Activated B cell treated with CpG ODN at 0.5 μM for 24 hours (primary cell): ENCODE measurements at regions of chr6 and their contacts with region 1.

Region 1: DNA sequence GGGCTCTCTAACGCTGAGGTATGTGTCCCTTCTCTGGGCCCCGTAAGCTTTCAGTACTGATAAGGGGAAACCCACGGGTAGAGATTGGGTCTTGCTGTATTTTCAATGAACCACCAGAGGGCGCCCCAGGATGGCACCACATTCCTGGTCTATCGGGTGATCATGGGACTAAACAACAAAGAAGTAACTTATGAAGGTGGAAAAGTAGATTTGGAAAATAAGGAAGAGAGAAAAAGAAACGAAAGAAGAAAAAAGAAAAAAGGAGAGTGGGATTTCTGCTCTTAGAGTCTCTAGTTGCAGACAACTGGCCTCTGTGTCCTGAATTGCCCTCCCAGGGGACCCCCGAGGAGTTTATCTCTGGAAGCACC is 93.8 kb downstream of the GMPR start:
- DNase-seq: peak; percentile 62
- ATAC-seq: peak; percentile 96
- H3K4me3 Mint-ChIP-seq: no peak overlapping the region
- H3K27ac Mint-ChIP-seq: no peak overlapping the region
- H3K4me1 Mint-ChIP-seq: peaks cover 11% of the 10 kb centered on the region
- H3K27me3 Mint-ChIP-seq: no peaks in the 10 kb centered on the region
- CTCF ChIP-seq: peak; percentile 78

Region 2: GRCh38 chr6:16286148-16286522 is 46.0 kb before region 1 on chr6:
- CTCF ChIA-PET with region 1: interaction called, 13 read pairs
- POLR2A ChIA-PET with region 1: no interaction called
- intact Hi-C with region 1: loop called (anchors 1 kb)
- DNase-seq: no peak
- ATAC-seq: no peak
- H3K4me3 Mint-ChIP-seq: no peak overlapping the region
- H3K27ac Mint-ChIP-seq: no peak overlapping the region
- H3K4me1 Mint-ChIP-seq: no peaks in the 10 kb centered on the region
- H3K27me3 Mint-ChIP-seq: no peaks in the 10 kb centered on the region
- CTCF ChIP-seq: no peak

Region 3: DNA sequence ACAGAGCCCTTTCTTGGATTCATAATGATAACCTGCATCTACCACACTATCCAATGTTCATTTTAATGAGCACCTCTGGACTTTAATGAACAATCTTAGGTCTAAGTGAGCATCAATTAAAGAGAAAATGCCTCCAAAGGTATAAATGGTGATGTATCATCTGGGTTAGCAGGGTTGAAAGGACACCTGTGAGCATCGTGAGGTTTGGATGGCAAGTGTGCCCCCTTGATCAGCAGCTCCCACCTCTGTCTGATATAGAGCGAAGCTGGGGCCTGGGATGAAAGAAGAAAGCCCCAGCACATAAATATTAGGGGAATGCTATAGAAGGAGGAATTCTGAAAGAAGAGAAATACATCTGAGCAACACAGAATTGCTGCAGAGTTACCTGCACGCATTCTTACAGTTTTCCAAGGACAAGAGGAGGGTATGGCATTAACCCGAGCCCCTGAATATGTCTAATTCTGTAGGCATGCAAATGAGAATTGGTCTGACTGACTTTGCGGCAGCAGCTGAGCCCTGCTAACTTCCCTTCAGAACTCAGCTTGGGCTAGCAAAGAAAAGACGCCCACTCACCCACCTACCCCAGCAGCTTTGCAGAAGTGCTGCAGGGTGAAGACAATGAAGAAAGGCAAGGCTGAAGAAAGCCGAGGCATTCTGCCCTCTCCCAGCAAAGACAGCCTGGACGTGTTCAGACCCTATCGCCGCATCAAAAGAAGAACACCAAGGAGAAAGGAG is 42.5 kb after region 1 on chr6:
- CTCF ChIA-PET with region 1: interaction called, 6 read pairs
- POLR2A ChIA-PET with region 1: no interaction called
- intact Hi-C with region 1: loop called (anchors 5 kb)
- DNase-seq: peak; percentile 18
- ATAC-seq: peak; percentile 87
- H3K4me3 Mint-ChIP-seq: peak overlapping the region; percentile 75
- H3K27ac Mint-ChIP-seq: peak overlapping the region; percentile 78
- H3K4me1 Mint-ChIP-seq: peaks cover 68% of the 10 kb centered on the region
- H3K27me3 Mint-ChIP-seq: no peaks in the 10 kb centered on the region
- CTCF ChIP-seq: no peak

Region 4: GRCh38 chr6:16514249-16514648 is 182.1 kb after region 1 on chr6:
- CTCF ChIA-PET with region 1: interaction called, 17 read pairs
- POLR2A ChIA-PET with region 1: interaction called, 4 read pairs
- intact Hi-C with region 1: loop called (anchors 1 kb)
- DNase-seq: no peak
- ATAC-seq: peak; percentile 56
- H3K4me3 Mint-ChIP-seq: no peak overlapping the region
- H3K27ac Mint-ChIP-seq: peak overlapping the region; percentile 14
- H3K4me1 Mint-ChIP-seq: peaks cover 46% of the 10 kb centered on the region
- H3K27me3 Mint-ChIP-seq: no peaks in the 10 kb centered on the region
- CTCF ChIP-seq: no peak

Region 5: DNA sequence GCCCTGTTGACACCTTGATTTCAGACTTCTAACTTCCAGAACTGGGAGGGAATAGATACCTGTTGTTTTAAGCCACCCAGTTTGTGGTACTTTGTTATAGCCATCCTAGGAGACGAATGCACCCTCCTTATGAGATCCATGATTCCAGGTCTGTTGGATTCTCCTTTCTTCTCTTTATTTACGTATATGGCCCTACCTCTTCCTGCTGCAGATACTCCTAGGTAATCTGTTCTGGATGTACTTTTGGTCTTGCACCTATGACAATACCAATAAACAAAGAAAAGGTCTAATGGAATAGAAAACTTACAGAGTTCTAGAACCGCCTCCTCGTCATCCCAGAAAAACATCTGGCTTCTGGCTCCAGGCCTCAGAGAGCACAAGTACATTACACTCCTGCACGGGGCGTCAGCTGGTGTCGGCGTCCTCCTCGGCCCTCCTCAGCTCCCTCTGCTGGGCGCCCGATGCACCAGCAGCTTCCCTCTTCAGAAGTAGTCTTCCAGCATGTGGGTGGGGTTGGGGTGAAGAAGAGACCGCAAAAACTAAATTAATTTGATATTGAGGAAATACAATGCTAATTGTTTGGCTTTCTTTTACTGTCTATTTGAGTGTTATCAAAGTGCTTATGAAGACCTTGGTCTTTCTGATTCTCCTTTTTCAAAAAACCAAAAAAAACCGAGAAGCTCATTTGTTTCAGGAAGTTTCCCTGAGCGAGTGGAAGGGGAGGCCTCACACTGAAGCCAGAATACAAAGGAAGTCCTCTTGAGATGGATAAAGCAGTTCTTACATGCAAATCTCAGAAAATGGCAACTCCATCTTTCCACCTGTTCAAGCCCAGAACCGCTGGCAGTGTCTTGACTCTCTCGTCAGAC is 438.8 kb after region 1 on chr6:
- CTCF ChIA-PET with region 1: interaction called, 59 read pairs
- POLR2A ChIA-PET with region 1: interaction called, 8 read pairs
- intact Hi-C with region 1: loop called (anchors 1 kb)
- DNase-seq: peak; percentile 59
- ATAC-seq: peak; percentile 97
- H3K4me3 Mint-ChIP-seq: peak overlapping the region; percentile 32
- H3K27ac Mint-ChIP-seq: no peak overlapping the region
- H3K4me1 Mint-ChIP-seq: peaks cover 16% of the 10 kb centered on the region
- H3K27me3 Mint-ChIP-seq: peaks cover 3% of the 10 kb centered on the region
- CTCF ChIP-seq: peak; percentile 81